Esophagus muscularis mucosa (tissue), 4 donors: ENCODE measurements at regions of chr7 and their contacts with region 1.

Region 1: GRCh38 chr7:23181684-23182553 is at the start of gene NUP42:
- DNase-seq: peak; percentile 99
- H3K4me3 ChIP-seq: peak within 1 kb of the TSS; percentile 66 to 83 (median 79)
- H3K27ac ChIP-seq: peak within 1 kb of the TSS; percentile 88 to 95 (median 92)
- H3K4me1 ChIP-seq: peaks cover 19 to 39% (median 31%) of the 10 kb centered on the region in 4 donors
- H3K27me3 ChIP-seq: no peaks in the 10 kb centered on the region
- CTCF ChIP-seq: no peak
- EP300 ChIP-seq: no peak
- POLR2A ChIP-seq: no peak
- total RNA-seq, gene NUP42: 16.6 to 31.6 (median 23.6) TPM

Region 2: DNA sequence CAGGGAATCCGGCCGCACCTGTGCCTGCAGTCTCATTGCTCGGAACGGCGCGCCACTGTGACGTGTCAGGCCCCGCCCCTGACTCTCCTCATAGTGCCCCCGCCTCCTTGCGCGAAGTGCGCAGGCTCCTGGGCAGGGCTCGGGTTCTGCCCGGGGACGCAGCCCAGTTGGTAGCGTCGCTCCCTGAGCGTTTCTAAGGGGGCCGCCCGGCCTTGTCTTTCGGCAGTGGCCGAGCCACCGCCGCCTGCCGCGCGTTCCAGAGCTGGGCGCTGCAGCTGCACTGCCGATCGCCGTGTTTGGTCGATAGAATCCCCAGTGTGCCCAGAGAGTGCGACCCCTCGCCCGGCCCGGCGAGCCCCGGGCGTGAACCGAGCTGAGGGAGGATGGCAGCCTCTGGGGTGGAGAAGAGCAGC is 76.3 kb before region 1 on chr7 and contains the start of gene KLHL7:
- intact Hi-C with region 1: loop called (anchors 2 kb)
- DNase-seq: peak; percentile 99
- H3K4me3 ChIP-seq: peak within 1 kb of the TSS; percentile 82 to 98 (median 92)
- H3K27ac ChIP-seq: peak within 1 kb of the TSS; percentile 90 to 98 (median 94)
- H3K4me1 ChIP-seq: peaks cover 28 to 46% (median 41%) of the 10 kb centered on the region in 4 donors
- H3K27me3 ChIP-seq: no peaks in the 10 kb centered on the region
- CTCF ChIP-seq: no peak
- EP300 ChIP-seq: no peak
- POLR2A ChIP-seq: peak; percentile 74
- total RNA-seq, gene KLHL7: 20.4 to 36.2 (median 30.8) TPM

Region 3: GRCh38 chr7:23298885-23299769 is 117.2 kb after region 1 on chr7 and contains the start of gene MALSU1:
- intact Hi-C with region 1: loop called (anchors 10 kb)
- DNase-seq: peak; percentile 99
- H3K4me3 ChIP-seq: peak within 1 kb of the TSS; percentile 77 to 97 (median 84)
- H3K27ac ChIP-seq: peak within 1 kb of the TSS; percentile 79 to 89 (median 86)
- H3K4me1 ChIP-seq: peaks cover 28 to 58% (median 54%) of the 10 kb centered on the region in 4 donors
- H3K27me3 ChIP-seq: peaks cover 0 to 9% (median 0%) of the 10 kb centered on the region in 4 donors
- CTCF ChIP-seq: no peak
- EP300 ChIP-seq: no peak
- POLR2A ChIP-seq: peak; percentile 59
- total RNA-seq, gene MALSU1: 39.0 to 74.2 (median 63.3) TPM